HepG2 (cell line): ENCODE measurements at regions of chr14 and their contacts with region 1.

Region 1: GRCh38 chr14:22986508-22987054 is 4.2 kb upstream of the AJUBA start:
- DNase-seq: peak; percentile 93
- ATAC-seq: peak; percentile 56
- H3K4me3 ChIP-seq: no peak overlapping the region
- H3K27ac ChIP-seq: no peak overlapping the region
- H3K4me1 ChIP-seq: peaks cover 37% of the 10 kb centered on the region
- H3K27me3 ChIP-seq: no peaks in the 10 kb centered on the region; a peak in 1 of 5 replicates
- CTCF ChIP-seq: no peak
- EP300 ChIP-seq: 0 out of 4 replicates have a peak, but pooled peaks of 1 of the 2 experiments have one; percentile 14
- POLR2A ChIP-seq: no peak
- RAD21 ChIP-seq: peak; percentile 96

Region 2: DNA sequence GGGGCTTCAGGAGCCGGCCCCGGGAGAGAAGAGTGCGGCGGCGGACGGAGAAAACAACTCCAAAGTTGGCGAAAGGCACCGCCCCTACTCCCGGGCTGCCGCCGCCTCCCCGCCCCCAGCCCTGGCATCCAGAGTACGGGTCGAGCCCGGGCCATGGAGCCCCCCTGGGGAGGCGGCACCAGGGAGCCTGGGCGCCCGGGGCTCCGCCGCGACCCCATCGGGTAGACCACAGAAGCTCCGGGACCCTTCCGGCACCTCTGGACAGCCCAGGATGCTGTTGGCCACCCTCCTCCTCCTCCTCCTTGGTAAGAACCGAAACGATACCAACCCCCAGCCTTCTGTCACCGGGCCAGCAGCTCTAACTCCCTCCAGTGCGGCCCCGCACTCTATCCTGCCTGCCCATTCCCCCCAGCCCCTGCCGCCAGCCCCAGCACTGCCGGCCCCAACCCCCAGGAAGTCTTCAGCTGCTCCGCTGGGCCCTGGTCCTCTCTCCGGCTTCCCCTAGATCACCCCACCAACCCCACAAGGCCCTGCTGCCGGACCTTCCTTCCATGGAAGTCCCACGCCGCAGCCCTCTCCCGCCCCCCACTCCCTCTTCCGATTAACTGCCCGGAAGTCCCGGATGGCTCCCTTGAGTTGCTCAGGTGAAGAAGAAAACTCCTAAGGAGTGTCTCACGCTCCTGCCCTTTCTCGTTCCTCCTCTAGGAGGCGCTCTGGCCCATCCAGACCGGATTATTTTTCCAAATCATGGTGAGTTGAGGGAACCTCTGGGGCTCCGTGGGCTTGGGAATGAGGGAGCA is 114.3 kb before region 1 on chr14:
- CTCF ChIA-PET with region 1: interaction called, 3 read pairs
- POLR2A ChIA-PET with region 1: interaction called, 17 read pairs
- in situ Hi-C with region 1: no loop called
- intact Hi-C with region 1: loop called (anchors 5 kb)
- DNase-seq: peak; percentile 84
- ATAC-seq: peak; percentile 62
- H3K4me3 ChIP-seq: peak overlapping the region; percentile 66 to 93 (median 82)
- H3K27ac ChIP-seq: peak overlapping the region; percentile 85
- H3K4me1 ChIP-seq: peaks cover 35% of the 10 kb centered on the region
- H3K27me3 ChIP-seq: no peaks in the 10 kb centered on the region; a peak in 1 of 5 replicates
- CTCF ChIP-seq: peak; percentile 99
- EP300 ChIP-seq: peak in 1 of 2 experiments; percentile 54; a peak in 2 of 4 replicates
- POLR2A ChIP-seq: no peak
- RAD21 ChIP-seq: peak; percentile 68

Region 3: DNA sequence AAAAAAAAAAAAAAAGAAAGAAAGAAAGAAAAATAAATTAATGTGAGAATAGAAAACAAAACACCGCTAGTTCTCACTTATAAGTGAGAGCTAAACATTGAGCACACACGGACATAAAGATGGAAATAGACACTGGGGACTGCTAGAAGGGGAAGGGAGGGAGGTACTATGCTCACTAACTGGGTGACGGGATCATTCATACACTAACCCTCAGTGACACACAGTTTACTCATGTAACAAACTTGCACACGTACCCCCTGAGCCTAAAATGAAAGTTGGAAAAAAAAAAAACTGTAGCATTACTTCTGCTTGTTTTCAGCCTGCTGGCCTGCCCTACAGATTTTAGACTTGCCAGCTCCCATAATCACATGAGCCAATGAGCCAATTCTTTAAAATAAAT is 46.9 kb before region 1 on chr14:
- CTCF ChIA-PET with region 1: interaction called, 23 read pairs
- POLR2A ChIA-PET with region 1: interaction called, 13 read pairs
- in situ Hi-C with region 1: no loop called
- intact Hi-C with region 1: loop called (anchors 1 kb)
- DNase-seq: no peak
- ATAC-seq: no peak
- H3K4me3 ChIP-seq: no peak overlapping the region
- H3K27ac ChIP-seq: no peak overlapping the region
- H3K4me1 ChIP-seq: no peaks in the 10 kb centered on the region
- H3K27me3 ChIP-seq: no peaks in the 10 kb centered on the region
- CTCF ChIP-seq: no peak
- EP300 ChIP-seq: no peak
- POLR2A ChIP-seq: no peak
- RAD21 ChIP-seq: no peak

Region 4: DNA sequence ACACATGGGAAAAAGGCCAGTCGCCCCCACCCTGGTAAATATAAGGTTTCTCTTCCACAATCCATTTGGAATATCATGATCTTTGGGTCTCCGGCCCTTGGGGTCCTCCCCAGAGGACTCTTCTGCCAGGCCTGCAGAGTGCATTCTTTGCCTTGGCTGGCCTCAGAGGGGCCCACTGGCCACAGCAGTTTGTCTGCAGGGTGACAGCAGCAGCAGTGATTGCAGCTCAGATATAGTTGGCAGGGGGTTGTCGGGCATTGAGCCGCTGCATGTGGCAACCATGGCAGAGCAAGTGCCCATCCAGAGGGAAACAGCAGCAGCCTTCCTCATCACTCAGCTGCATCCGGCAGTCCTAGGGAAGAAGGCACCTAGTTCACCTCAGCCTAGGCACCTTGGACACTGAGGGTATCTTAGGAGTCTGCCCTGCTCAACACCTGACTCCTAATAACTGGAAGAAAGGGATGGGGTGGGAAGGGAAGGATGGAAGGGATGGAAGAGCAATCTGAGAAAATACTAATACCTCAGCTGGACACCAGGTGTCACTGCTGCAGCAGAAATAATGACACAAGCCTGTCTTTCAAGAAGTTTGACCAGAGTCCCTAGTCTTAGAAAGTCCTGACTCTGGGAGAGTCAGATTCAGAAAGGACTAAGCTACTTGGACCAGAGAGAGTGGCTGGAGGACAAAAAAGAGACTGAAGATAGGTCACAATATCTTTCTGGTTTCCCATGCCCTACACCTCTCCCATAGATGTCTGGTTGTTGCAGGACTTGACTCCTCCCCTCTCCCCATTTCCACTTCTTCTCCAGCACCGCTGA is 13.2 kb before region 1 on chr14:
- CTCF ChIA-PET with region 1: interaction called, 298 read pairs
- POLR2A ChIA-PET with region 1: interaction called, 1,670 read pairs
- in situ Hi-C with region 1: no loop called
- intact Hi-C with region 1: loop called (anchors 1 kb)
- DNase-seq: peak; percentile 82
- ATAC-seq: no peak
- H3K4me3 ChIP-seq: no peak overlapping the region
- H3K27ac ChIP-seq: peak overlapping the region; percentile 97
- H3K4me1 ChIP-seq: peaks cover 65% of the 10 kb centered on the region
- H3K27me3 ChIP-seq: no peaks in the 10 kb centered on the region
- CTCF ChIP-seq: no peak
- EP300 ChIP-seq: no peak
- POLR2A ChIP-seq: peak in 1 of 2 experiments; percentile 73; a peak in 2 of 4 replicates
- RAD21 ChIP-seq: peak; percentile 97

Region 5: GRCh38 chr14:23040100-23040499 is 53.5 kb after region 1 on chr14:
- CTCF ChIA-PET with region 1: no interaction called
- POLR2A ChIA-PET with region 1: interaction called, 21 read pairs
- in situ Hi-C with region 1: no loop called
- intact Hi-C with region 1: loop called (anchors 2 kb)
- DNase-seq: peak; percentile 68
- ATAC-seq: peak; percentile 48
- H3K4me3 ChIP-seq: no peak overlapping the region
- H3K27ac ChIP-seq: no peak overlapping the region
- H3K4me1 ChIP-seq: peaks cover 18% of the 10 kb centered on the region
- H3K27me3 ChIP-seq: peaks cover 16 to 33% of the 10 kb centered on the region in 2 experiments
- CTCF ChIP-seq: no peak
- EP300 ChIP-seq: no peak
- POLR2A ChIP-seq: no peak
- RAD21 ChIP-seq: no peak

Region 6: GRCh38 chr14:23057757-23058653 is 71.4 kb after region 1 on chr14:
- CTCF ChIA-PET with region 1: interaction called, 173 read pairs
- POLR2A ChIA-PET with region 1: interaction called, 70 read pairs
- in situ Hi-C with region 1: loop called (anchors 5 kb)
- intact Hi-C with region 1: loop called (anchors 1 kb)
- DNase-seq: peak; percentile 92
- ATAC-seq: peak; percentile 71
- H3K4me3 ChIP-seq: peak overlapping the region; percentile 55 to 88 (median 64)
- H3K27ac ChIP-seq: no peak overlapping the region
- H3K4me1 ChIP-seq: peaks cover 29% of the 10 kb centered on the region
- H3K27me3 ChIP-seq: peaks cover 0 to 6% of the 10 kb centered on the region in 2 experiments; a peak in 1 of 5 replicates
- CTCF ChIP-seq: peak; percentile 100
- EP300 ChIP-seq: peak in 1 of 2 experiments; percentile 66; a peak in 1 of 4 replicates
- POLR2A ChIP-seq: peak in 1 of 2 experiments; percentile 39; a peak in 1 of 4 replicates
- RAD21 ChIP-seq: peak; percentile 98

Region 7: DNA sequence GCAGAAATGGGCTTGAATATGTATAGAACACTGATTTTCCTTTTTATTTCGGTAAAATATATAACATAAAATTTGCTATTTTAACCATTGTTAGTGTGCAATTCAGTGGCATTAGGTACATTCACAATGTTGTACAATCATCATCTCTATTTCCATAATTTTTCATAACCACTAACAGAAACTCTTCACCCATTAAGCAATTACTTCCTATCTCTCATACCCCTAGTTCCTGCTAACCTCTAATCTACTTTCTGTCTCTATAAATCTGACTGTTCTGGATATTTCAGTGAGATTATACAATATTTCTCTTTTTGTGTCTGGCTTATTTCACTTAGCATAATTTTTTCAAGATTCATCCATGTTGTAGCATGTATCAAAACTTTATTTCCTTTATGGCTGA is 242.2 kb after region 1 on chr14:
- CTCF ChIA-PET with region 1: no interaction called
- POLR2A ChIA-PET with region 1: no interaction called
- in situ Hi-C with region 1: no loop called
- intact Hi-C with region 1: no loop called
- DNase-seq: no peak
- ATAC-seq: no peak
- H3K4me3 ChIP-seq: no peak overlapping the region
- H3K27ac ChIP-seq: no peak overlapping the region
- H3K4me1 ChIP-seq: no peaks in the 10 kb centered on the region
- H3K27me3 ChIP-seq: 0 out of 5 replicates have a peak, but pooled peaks cover 0 to 2% of the 10 kb centered on the region in 2 experiments
- CTCF ChIP-seq: no peak
- EP300 ChIP-seq: no peak
- POLR2A ChIP-seq: no peak
- RAD21 ChIP-seq: no peak

Region 8: GRCh38 chr14:23301288-23301968 is 314.8 kb after region 1 on chr14:
- CTCF ChIA-PET with region 1: no interaction called
- POLR2A ChIA-PET with region 1: interaction called, 5 read pairs
- in situ Hi-C with region 1: no loop called
- intact Hi-C with region 1: loop called (anchors 10 kb)
- DNase-seq: peak; percentile 100
- ATAC-seq: peak; percentile 87
- H3K4me3 ChIP-seq: peak overlapping the region; percentile 67 to 88 (median 75)
- H3K27ac ChIP-seq: peak overlapping the region; percentile 91
- H3K4me1 ChIP-seq: peaks cover 57% of the 10 kb centered on the region
- H3K27me3 ChIP-seq: no peaks in the 10 kb centered on the region; a peak in 1 of 5 replicates
- CTCF ChIP-seq: peak; percentile 92
- EP300 ChIP-seq: peak in 1 of 2 experiments; percentile 54; a peak in 2 of 4 replicates
- POLR2A ChIP-seq: no peak
- RAD21 ChIP-seq: peak; percentile 87